ENCODE measurements at regions of chr2 and their contacts with region 1.

Region 1: DNA sequence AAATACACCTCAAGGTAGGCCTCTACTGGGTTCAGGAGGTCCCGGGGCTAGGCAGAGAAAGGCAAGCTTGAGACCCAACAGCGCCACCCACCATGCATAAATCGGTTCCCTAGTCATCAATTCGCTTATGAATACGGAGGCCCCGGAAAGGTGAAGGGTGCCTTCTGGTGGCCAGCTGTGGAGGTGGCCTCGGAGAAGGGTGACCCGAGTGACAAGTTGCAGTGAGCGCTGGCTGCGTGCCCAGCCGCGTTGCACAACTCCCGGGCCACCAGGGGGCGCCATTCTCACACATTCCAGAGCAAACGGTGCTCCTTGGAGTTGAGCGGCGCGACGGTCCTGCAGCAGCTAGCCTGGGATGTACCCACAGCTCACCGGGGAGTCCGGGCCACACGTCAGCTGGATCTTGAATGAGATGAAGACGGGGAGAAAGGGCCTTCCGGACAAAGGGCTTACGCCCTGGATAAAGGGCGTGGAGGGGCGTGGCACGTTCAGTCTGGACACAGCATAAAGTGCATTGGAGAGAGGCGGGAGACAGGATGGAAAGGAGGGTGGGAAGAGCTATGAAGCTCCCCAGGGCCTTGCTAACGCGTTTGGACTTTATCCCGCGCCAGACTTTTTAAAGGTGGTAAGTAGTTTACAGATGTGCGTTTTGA is 20.4 kb downstream of the TMSB10 start:
- DNase-seq: peak; percentile 96 to 100
- H3K4me3 ChIP-seq: peak overlapping the region in 3 of 4 experiments; percentile 28 to 53 (median 45); a peak in 6 of 8 replicates
- H3K27ac ChIP-seq: no peak overlapping the region
- H3K4me1 ChIP-seq: peaks cover 0 to 10% (median 2%) of the 10 kb centered on the region in 4 experiments; a peak in 2 of 7 replicates
- H3K27me3 ChIP-seq: peaks cover 0 to 9% (median 3%) of the 10 kb centered on the region in 4 experiments; a peak in 2 of 7 replicates
- CTCF ChIP-seq: peak; percentile 96 to 99 (median 97)
- EP300 ChIP-seq: peak in 1 of 2 experiments; percentile 37; a peak in 1 of 3 replicates
- POLR2A ChIP-seq: no peak
- RAD21 ChIP-seq: peak; percentile 81 to 89

Region 2: GRCh38 chr2:84757648-84758047 is 168.2 kb before region 1 on chr2:
- CTCF ChIA-PET with region 1: no interaction called
- POLR2A ChIA-PET with region 1: no interaction called
- DNase-seq: no peak
- H3K4me3 ChIP-seq: no peak overlapping the region
- H3K27ac ChIP-seq: no peak overlapping the region
- H3K4me1 ChIP-seq: peaks cover 0 to 5% (median 1%) of the 10 kb centered on the region in 4 experiments; a peak in 3 of 7 replicates
- H3K27me3 ChIP-seq: no peaks in the 10 kb centered on the region
- CTCF ChIP-seq: no peak
- EP300 ChIP-seq: no peak
- POLR2A ChIP-seq: no peak
- RAD21 ChIP-seq: no peak

Region 3: DNA sequence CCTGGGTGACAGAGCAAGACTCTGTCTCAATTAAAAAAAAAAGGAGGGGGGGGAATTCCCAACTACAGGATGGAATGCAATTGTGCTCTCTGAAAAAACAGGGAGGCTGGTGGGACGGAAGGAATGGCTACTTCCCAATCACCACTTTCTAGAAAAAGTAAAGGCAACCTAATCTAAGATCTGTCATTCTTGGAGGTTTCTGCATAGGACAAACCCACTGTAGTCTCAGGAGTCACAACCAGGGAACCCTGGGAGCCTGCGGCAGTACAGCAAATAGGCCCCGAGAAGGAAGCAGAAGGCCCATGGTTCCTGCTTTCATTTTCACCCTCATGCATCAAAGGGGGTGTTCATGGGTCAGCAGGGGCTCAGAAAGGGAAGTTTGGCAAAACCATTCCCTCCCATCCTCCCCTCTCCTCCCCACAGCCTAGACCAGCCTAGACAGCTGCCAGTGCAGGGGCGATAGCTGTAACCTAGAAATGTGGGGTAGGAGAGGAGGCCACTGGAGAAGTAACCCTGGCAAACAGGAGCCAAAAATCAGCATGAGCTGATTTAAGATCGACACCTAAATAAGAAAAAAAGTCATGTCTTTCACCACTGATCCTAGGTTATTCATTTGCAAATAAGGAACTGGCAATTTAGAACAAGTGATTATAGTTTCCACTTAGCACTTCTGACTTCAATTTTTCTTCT is 92.9 kb before region 1 on chr2:
- CTCF ChIA-PET with region 1: interaction called, 10 read pairs
- POLR2A ChIA-PET with region 1: no interaction called
- DNase-seq: no peak
- H3K4me3 ChIP-seq: no peak overlapping the region
- H3K27ac ChIP-seq: no peak overlapping the region
- H3K4me1 ChIP-seq: peaks cover 0 to 7% (median 2%) of the 10 kb centered on the region in 4 experiments; a peak in 5 of 7 replicates
- H3K27me3 ChIP-seq: peaks cover 0 to 2% (median 0%) of the 10 kb centered on the region in 4 experiments; a peak in 1 of 7 replicates
- CTCF ChIP-seq: no peak
- EP300 ChIP-seq: no peak
- POLR2A ChIP-seq: no peak
- RAD21 ChIP-seq: no peak

Region 4: DNA sequence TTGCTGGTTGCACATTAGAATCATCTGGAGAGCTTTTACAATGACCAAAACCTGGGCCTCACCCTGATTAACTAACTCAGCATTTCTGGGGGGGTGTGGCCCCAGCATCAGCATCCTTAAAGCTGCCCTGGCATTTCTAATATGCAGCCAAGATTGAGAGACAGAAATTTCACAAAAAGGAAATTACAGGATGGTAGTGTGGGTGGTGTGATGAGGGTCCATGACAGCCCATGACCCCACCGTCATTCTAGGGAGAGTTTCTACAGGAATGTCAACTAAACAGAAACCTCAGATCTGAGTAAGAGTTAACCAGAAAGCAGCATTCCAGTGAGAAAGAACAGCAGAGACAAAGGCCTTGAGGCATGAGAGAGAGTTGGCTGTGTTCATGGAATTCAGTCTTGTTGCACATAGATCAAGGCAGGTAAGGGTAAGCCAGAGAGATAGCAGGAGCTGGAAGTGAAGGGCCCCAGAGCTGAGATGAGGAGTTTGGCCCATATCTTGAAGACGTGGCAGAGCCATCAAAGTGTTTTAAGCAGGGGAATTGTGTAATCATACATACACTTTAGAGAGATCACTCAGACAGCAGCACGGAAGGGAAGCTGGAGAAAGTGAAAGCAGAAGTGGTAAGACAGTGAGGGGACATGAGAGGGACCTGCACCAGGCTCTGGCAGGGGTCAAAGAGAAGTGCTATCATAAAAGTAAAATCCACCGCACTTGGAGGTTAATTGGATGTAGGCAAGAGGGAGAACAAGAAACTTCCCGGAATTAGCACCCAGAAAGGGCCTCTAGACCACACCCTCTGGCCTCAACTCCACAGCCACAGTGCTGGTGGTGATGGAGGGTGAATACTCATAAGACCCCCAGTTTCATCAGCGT is 37.2 kb before region 1 on chr2:
- CTCF ChIA-PET with region 1: interaction called, 38 read pairs
- POLR2A ChIA-PET with region 1: no interaction called
- DNase-seq: peak in 1 of 2 experiments; percentile 31
- H3K4me3 ChIP-seq: no peak overlapping the region
- H3K27ac ChIP-seq: no peak overlapping the region
- H3K4me1 ChIP-seq: no peaks in the 10 kb centered on the region
- H3K27me3 ChIP-seq: no peaks in the 10 kb centered on the region; a peak in 2 of 7 replicates
- CTCF ChIP-seq: no peak
- EP300 ChIP-seq: no peak
- POLR2A ChIP-seq: no peak
- RAD21 ChIP-seq: no peak

Region 5: GRCh38 chr2:84939426-84940087 is 13.7 kb after region 1 on chr2:
- CTCF ChIA-PET with region 1: interaction called, 57 read pairs
- POLR2A ChIA-PET with region 1: interaction called, 10 read pairs
- DNase-seq: no peak
- H3K4me3 ChIP-seq: no peak overlapping the region
- H3K27ac ChIP-seq: peak overlapping the region; percentile 23; the same call in 1 of the 2 replicates
- H3K4me1 ChIP-seq: peaks cover 3 to 8% (median 4%) of the 10 kb centered on the region in 4 experiments; a peak in 5 of 7 replicates
- H3K27me3 ChIP-seq: no peaks in the 10 kb centered on the region
- CTCF ChIP-seq: no peak
- EP300 ChIP-seq: no peak
- POLR2A ChIP-seq: no peak
- RAD21 ChIP-seq: no peak

Region 6: GRCh38 chr2:84970868-84971509 is 45.1 kb after region 1 on chr2 and contains the start of gene KCMF1:
- CTCF ChIA-PET with region 1: interaction called, 17 read pairs
- POLR2A ChIA-PET with region 1: interaction called, 9 read pairs
- DNase-seq: peak in 1 of 2 experiments; percentile 70
- H3K4me3 ChIP-seq: peak within 1 kb of the TSS; percentile 95 to 99 (median 96)
- H3K27ac ChIP-seq: peak within 1 kb of the TSS; percentile 95
- H3K4me1 ChIP-seq: peaks cover 0 to 9% (median 9%) of the 10 kb centered on the region in 4 experiments; a peak in 5 of 7 replicates
- H3K27me3 ChIP-seq: no peaks in the 10 kb centered on the region
- CTCF ChIP-seq: no peak
- EP300 ChIP-seq: no peak
- POLR2A ChIP-seq: peak in 1 of 2 experiments; percentile 32; a peak in 1 of 3 replicates
- RAD21 ChIP-seq: no peak
- total RNA-seq, gene KCMF1: 149 and 152 TPM in 2 replicates

Region 7: GRCh38 chr2:85066874-85067351 is 141.1 kb after region 1 on chr2:
- CTCF ChIA-PET with region 1: interaction called, 24 read pairs
- POLR2A ChIA-PET with region 1: no interaction called
- DNase-seq: peak; percentile 65 to 95
- H3K4me3 ChIP-seq: peak overlapping the region in 3 of 4 experiments; percentile 25 to 49 (median 47); a peak in 4 of 8 replicates
- H3K27ac ChIP-seq: no peak overlapping the region
- H3K4me1 ChIP-seq: peaks cover 8 to 18% (median 10%) of the 10 kb centered on the region in 4 experiments
- H3K27me3 ChIP-seq: peaks cover 0 to 4% (median 0%) of the 10 kb centered on the region in 4 experiments; a peak in 4 of 7 replicates
- CTCF ChIP-seq: peak; percentile 86 to 91 (median 90)
- EP300 ChIP-seq: no peak
- POLR2A ChIP-seq: no peak
- RAD21 ChIP-seq: peak; percentile 92

Region 8: GRCh38 chr2:85078536-85078935 is 152.7 kb after region 1 on chr2:
- CTCF ChIA-PET with region 1: no interaction called
- POLR2A ChIA-PET with region 1: no interaction called
- DNase-seq: no peak
- H3K4me3 ChIP-seq: no peak overlapping the region
- H3K27ac ChIP-seq: no peak overlapping the region
- H3K4me1 ChIP-seq: no peaks in the 10 kb centered on the region; a peak in 1 of 7 replicates
- H3K27me3 ChIP-seq: no peaks in the 10 kb centered on the region; a peak in 2 of 7 replicates
- CTCF ChIP-seq: no peak
- EP300 ChIP-seq: no peak
- POLR2A ChIP-seq: no peak
- RAD21 ChIP-seq: no peak

Measured in H1 (cell line).